ENCODE measurements at regions of chr2 and their contacts with region 1.

Region 1: GRCh38 chr2:157386247-157386646 is 57.6 kb downstream of the CYTIP start:
- DNase-seq: no peak
- ATAC-seq: no peak
- H3K4me3 Mint-ChIP-seq: no peak overlapping the region
- H3K27ac Mint-ChIP-seq: peak overlapping the region; percentile 30
- H3K4me1 Mint-ChIP-seq: peaks cover 38% of the 10 kb centered on the region
- H3K27me3 Mint-ChIP-seq: no peaks in the 10 kb centered on the region

Region 2: GRCh38 chr2:157990173-157990572 is 603.9 kb after region 1 on chr2:
- CTCF ChIA-PET with region 1: no interaction called
- POLR2A ChIA-PET with region 1: no interaction called
- intact Hi-C with region 1: loop called in 1 of 2 experiments (anchors 10 kb)
- DNase-seq: no peak
- ATAC-seq: no peak
- H3K4me3 Mint-ChIP-seq: no peak overlapping the region
- H3K27ac Mint-ChIP-seq: no peak overlapping the region
- H3K4me1 Mint-ChIP-seq: no peaks in the 10 kb centered on the region
- H3K27me3 Mint-ChIP-seq: peaks cover 5% of the 10 kb centered on the region

Region 3: GRCh38 chr2:158321264-158321663 is 935.0 kb after region 1 on chr2:
- CTCF ChIA-PET with region 1: no interaction called
- POLR2A ChIA-PET with region 1: no interaction called
- intact Hi-C with region 1: no loop called
- DNase-seq: no peak
- ATAC-seq: no peak
- H3K4me3 Mint-ChIP-seq: no peak overlapping the region
- H3K27ac Mint-ChIP-seq: no peak overlapping the region
- H3K4me1 Mint-ChIP-seq: no peaks in the 10 kb centered on the region
- H3K27me3 Mint-ChIP-seq: no peaks in the 10 kb centered on the region

Measured in activated CD4-positive, alpha-beta T cell treated with anti-CD3 and anti-CD28 coated beads for 36 hours (primary cell).